Natural killer cell (primary cell): ENCODE measurements at regions of chr3 and their contacts with region 1.

Region 1: DNA sequence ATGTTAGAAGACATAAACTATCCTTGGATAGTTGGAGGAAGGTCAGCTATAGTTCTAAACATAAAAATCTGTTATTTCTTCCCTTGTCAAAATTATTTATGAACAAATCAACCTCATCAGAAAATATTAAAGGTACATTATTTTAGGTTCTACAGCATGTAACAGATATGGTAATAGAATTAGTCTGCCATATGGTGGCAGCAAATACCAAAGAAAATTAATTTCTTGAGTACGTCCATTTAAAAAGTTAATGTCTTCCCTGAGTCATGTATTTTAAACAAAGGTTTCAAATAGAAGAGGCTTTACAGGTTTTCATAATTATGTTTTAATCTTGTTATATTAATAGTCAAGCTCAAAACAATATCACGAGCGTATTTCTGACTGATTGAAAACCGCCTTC is 17.9 kb upstream of the ANKRD28 start:
- DNase-seq: peak in 1 of 2 donors; percentile 66
- ATAC-seq: peak in 2 of 3 donors; percentile 59 to 66
- H3K4me3 ChIP-seq: no peak overlapping the region
- H3K4me3 Mint-ChIP-seq: no peak overlapping the region
- H3K27ac ChIP-seq: no peak overlapping the region
- H3K27ac Mint-ChIP-seq: peak overlapping the region in 1 of 2 donors; percentile 24
- H3K4me1 ChIP-seq: peaks cover 7% of the 10 kb centered on the region
- H3K4me1 Mint-ChIP-seq: peaks cover 9 to 16% of the 10 kb centered on the region in 2 donors
- H3K27me3 ChIP-seq: no peaks in the 10 kb centered on the region
- H3K27me3 Mint-ChIP-seq: no peaks in the 10 kb centered on the region
- CTCF ChIP-seq: peak; percentile 42

Region 2: GRCh38 chr3:15629860-15630597 is 185.7 kb before region 1 on chr3:
- intact Hi-C with region 1: loop called (anchors 1 kb)
- DNase-seq: peak; percentile 43 to 87
- ATAC-seq: peak; percentile 98 to 100 (median 100)
- H3K4me3 ChIP-seq: no peak overlapping the region
- H3K4me3 Mint-ChIP-seq: peak overlapping the region; percentile 78
- H3K27ac ChIP-seq: no peak overlapping the region
- H3K27ac Mint-ChIP-seq: peak overlapping the region; percentile 2 to 59
- H3K4me1 ChIP-seq: peaks cover 6% of the 10 kb centered on the region
- H3K4me1 Mint-ChIP-seq: peaks cover 24 to 28% of the 10 kb centered on the region in 2 donors
- H3K27me3 ChIP-seq: no peaks in the 10 kb centered on the region
- H3K27me3 Mint-ChIP-seq: no peaks in the 10 kb centered on the region
- CTCF ChIP-seq: peak; percentile 75

Region 3: DNA sequence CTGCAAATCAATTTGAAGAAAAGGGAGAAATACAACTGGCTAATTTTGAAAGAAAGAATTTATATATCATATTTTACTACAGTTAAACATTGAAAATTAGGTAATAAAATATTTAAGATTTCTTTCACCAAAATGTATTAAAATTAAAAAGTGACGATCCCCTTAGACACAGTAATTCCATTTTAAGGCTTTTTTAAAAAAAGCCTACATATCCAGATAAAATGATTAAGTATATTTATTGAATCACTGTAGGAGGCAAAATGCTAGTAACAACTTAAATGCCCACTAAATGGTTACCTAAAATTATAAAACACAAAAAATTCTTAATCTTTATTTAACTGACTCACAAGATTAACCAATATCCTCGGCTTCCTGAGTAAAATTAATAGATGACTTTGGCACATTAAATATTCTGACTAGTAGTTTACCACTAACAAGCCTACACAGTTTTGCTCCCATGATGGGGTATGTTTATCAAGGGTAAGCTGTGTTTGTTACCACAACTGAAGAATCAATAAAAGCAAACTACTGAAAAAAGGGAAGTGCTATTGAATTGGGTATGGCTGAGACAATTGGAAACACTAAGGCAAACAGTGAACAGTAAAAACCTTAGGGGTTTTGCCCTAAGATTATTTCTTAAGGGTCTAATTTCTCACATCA is 46.3 kb before region 1 on chr3:
- intact Hi-C with region 1: no loop called
- DNase-seq: no peak
- ATAC-seq: no peak
- H3K4me3 ChIP-seq: no peak overlapping the region
- H3K4me3 Mint-ChIP-seq: no peak overlapping the region
- H3K27ac ChIP-seq: no peak overlapping the region
- H3K27ac Mint-ChIP-seq: no peak overlapping the region
- H3K4me1 ChIP-seq: no peaks in the 10 kb centered on the region
- H3K4me1 Mint-ChIP-seq: peaks cover 6 to 50% of the 10 kb centered on the region in 2 donors
- H3K27me3 ChIP-seq: no peaks in the 10 kb centered on the region
- H3K27me3 Mint-ChIP-seq: no peaks in the 10 kb centered on the region
- CTCF ChIP-seq: no peak

Region 4: GRCh38 chr3:16048435-16049318 is 233.0 kb after region 1 on chr3:
- intact Hi-C with region 1: loop called (anchors 10 kb)
- DNase-seq: peak in 1 of 2 donors; percentile 72
- ATAC-seq: peak; percentile 81 to 98 (median 84)
- H3K4me3 ChIP-seq: no peak overlapping the region
- H3K4me3 Mint-ChIP-seq: peak overlapping the region; percentile 81
- H3K27ac ChIP-seq: no peak overlapping the region
- H3K27ac Mint-ChIP-seq: no peak overlapping the region
- H3K4me1 ChIP-seq: no peaks in the 10 kb centered on the region
- H3K4me1 Mint-ChIP-seq: peaks cover 6 to 7% of the 10 kb centered on the region in 2 donors
- H3K27me3 ChIP-seq: no peaks in the 10 kb centered on the region
- H3K27me3 Mint-ChIP-seq: peaks cover 0 to 10% of the 10 kb centered on the region in 2 donors
- CTCF ChIP-seq: peak; percentile 83

Region 5: GRCh38 chr3:16247276-16248061 is 431.8 kb after region 1 on chr3:
- intact Hi-C with region 1: loop called (anchors 2 kb)
- DNase-seq: peak; percentile 64 to 91
- ATAC-seq: peak; percentile 90 to 98 (median 97)
- H3K4me3 ChIP-seq: no peak overlapping the region
- H3K4me3 Mint-ChIP-seq: no peak overlapping the region
- H3K27ac ChIP-seq: no peak overlapping the region
- H3K27ac Mint-ChIP-seq: no peak overlapping the region
- H3K4me1 ChIP-seq: peaks cover 5% of the 10 kb centered on the region
- H3K4me1 Mint-ChIP-seq: peaks cover 0 to 11% of the 10 kb centered on the region in 2 donors
- H3K27me3 ChIP-seq: no peaks in the 10 kb centered on the region
- H3K27me3 Mint-ChIP-seq: no peaks in the 10 kb centered on the region
- CTCF ChIP-seq: peak; percentile 89